CD14-positive monocyte (primary cell): ENCODE measurements at regions of chr2 and their contacts with region 1.

Region 1: GRCh38 chr2:109128048-109128465 is 948 bp upstream of the SH3RF3 start:
- DNase-seq: peak; percentile 51 to 67 (median 65)
- H3K4me3 ChIP-seq: peak overlapping the region; percentile 33 to 87 (median 62)
- H3K4me3 Mint-ChIP-seq: peak overlapping the region; percentile 77 to 87
- H3K27ac ChIP-seq: no peak overlapping the region
- H3K27ac Mint-ChIP-seq: peak overlapping the region in 3 of 7 donors; percentile 30 to 42 (median 40)
- H3K4me1 ChIP-seq: peaks cover 10 to 28% of the 10 kb centered on the region in 2 donors
- H3K4me1 Mint-ChIP-seq: peaks cover 23% of the 10 kb centered on the region
- H3K27me3 ChIP-seq: peaks cover 30 to 42% of the 10 kb centered on the region in 2 donors
- H3K27me3 Mint-ChIP-seq: peaks cover 37 to 57% (median 37%) of the 10 kb centered on the region in 3 donors
- CTCF ChIP-seq: peak; percentile 94

Region 2: DNA sequence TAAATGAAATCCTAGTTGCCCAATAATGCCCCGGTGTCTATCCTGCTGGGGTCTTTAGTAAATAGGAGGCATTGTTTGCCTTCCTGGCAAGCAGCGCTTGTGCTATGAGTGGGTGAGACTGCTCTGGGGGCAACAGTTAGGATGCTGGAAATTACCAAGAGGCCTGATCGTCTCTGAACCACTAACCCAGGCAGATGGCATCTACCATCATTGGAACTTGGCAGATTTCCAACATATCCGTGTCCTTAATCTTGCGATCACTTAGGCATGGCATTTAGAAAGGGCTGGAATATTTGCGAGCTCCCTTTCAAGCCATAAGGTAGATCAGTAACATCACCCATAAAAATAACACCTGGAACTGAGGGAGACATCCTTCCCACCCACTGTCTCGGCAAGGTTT is 17.9 kb before region 1 on chr2:
- intact Hi-C with region 1: no loop called
- DNase-seq: no peak
- H3K4me3 ChIP-seq: no peak overlapping the region
- H3K4me3 Mint-ChIP-seq: no peak overlapping the region
- H3K27ac ChIP-seq: no peak overlapping the region
- H3K27ac Mint-ChIP-seq: no peak overlapping the region
- H3K4me1 ChIP-seq: no peaks in the 10 kb centered on the region
- H3K4me1 Mint-ChIP-seq: no peaks in the 10 kb centered on the region
- H3K27me3 ChIP-seq: no peaks in the 10 kb centered on the region
- H3K27me3 Mint-ChIP-seq: peaks cover 3 to 4% (median 3%) of the 10 kb centered on the region in 3 donors
- CTCF ChIP-seq: no peak

Region 3: GRCh38 chr2:109331896-109332848 is 204.1 kb after region 1 on chr2:
- intact Hi-C with region 1: loop called in 1 of 2 experiments (anchors 10 kb)
- DNase-seq: peak; percentile 62 to 86 (median 80)
- H3K4me3 ChIP-seq: peak overlapping the region in 1 of 3 experiments; percentile 62
- H3K4me3 Mint-ChIP-seq: peak overlapping the region; percentile 69 to 87
- H3K27ac ChIP-seq: no peak overlapping the region
- H3K27ac Mint-ChIP-seq: peak overlapping the region in 6 of 7 donors; percentile 6 to 69 (median 58)
- H3K4me1 ChIP-seq: peaks cover 43 to 45% of the 10 kb centered on the region in 2 donors
- H3K4me1 Mint-ChIP-seq: peaks cover 47% of the 10 kb centered on the region
- H3K27me3 ChIP-seq: peaks cover 3 to 16% of the 10 kb centered on the region in 2 donors
- H3K27me3 Mint-ChIP-seq: peaks cover 33 to 44% (median 42%) of the 10 kb centered on the region in 3 donors
- CTCF ChIP-seq: no peak

Region 4: DNA sequence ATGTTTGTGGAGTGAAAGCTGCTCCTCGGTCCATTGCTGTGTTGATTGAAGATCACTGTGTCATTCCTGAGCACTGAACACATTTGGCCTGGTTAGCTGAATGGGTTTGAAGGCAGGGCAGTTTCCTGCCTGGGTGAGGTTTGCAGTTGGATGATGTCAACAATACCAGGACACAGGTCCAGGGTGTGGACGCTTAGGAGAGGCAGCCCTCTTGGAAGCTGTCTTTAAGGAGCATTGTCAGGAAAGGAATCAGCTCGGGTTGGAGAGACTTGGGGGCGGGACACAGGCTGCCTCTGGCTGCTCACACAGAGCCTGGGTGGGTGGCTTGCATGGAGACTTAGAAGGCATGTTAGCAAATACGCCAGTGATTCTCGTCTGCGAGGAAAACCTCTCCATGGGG is 248.1 kb after region 1 on chr2:
- intact Hi-C with region 1: loop called in 1 of 2 experiments (anchors 10 kb)
- DNase-seq: no peak
- H3K4me3 ChIP-seq: no peak overlapping the region
- H3K4me3 Mint-ChIP-seq: no peak overlapping the region
- H3K27ac ChIP-seq: no peak overlapping the region
- H3K27ac Mint-ChIP-seq: peak overlapping the region in 1 of 7 donors; percentile 18
- H3K4me1 ChIP-seq: no peaks in the 10 kb centered on the region
- H3K4me1 Mint-ChIP-seq: no peaks in the 10 kb centered on the region
- H3K27me3 ChIP-seq: no peaks in the 10 kb centered on the region
- H3K27me3 Mint-ChIP-seq: peaks cover 0 to 6% (median 4%) of the 10 kb centered on the region in 3 donors
- CTCF ChIP-seq: no peak